Left ventricle myocardium inferior (tissue), 1 donor: ENCODE measurements at regions of chr14 and their contacts with region 1.

Region 1: DNA sequence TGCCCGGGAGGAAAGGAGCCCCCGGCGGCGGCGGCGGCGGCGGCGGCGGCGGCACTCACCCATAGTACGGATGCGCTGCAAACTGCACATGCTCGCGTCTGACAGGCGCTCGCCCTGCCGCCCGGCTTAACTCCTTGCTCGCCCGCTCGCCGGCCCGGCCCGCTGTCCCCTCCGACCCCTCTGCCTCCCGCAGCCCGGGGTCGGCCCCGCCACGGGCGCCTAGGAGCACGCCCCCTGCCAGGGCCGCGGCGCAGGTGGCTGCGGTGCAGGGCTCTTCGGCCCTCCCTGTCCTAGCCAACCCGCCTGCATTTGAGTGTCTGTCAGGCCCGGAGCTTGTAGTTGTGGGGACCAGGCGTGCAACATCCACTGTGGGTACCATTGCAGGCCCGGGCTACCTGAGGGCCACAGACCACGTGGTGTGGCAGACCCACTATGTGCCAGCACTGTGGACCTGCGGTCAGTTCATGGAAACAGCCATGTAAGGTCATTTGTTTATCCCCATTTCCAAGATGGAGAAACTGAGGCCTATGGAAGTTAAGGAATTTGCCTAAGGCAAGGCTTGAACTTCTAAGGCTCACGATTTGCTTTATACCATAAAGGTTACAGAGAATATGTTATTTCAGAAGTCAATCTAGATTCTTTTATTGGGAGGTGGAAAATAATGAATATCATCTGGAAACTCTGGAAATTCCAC is 17.6 kb upstream of the PLEKHH1 start:
- DNase-seq: no peak
- H3K4me3 ChIP-seq: peak overlapping the region; percentile 86
- H3K27ac ChIP-seq: peak overlapping the region; percentile 50
- H3K4me1 ChIP-seq: peaks cover 24% of the 10 kb centered on the region
- H3K27me3 ChIP-seq: peaks cover 25% of the 10 kb centered on the region
- CTCF ChIP-seq: no peak

Region 2: DNA sequence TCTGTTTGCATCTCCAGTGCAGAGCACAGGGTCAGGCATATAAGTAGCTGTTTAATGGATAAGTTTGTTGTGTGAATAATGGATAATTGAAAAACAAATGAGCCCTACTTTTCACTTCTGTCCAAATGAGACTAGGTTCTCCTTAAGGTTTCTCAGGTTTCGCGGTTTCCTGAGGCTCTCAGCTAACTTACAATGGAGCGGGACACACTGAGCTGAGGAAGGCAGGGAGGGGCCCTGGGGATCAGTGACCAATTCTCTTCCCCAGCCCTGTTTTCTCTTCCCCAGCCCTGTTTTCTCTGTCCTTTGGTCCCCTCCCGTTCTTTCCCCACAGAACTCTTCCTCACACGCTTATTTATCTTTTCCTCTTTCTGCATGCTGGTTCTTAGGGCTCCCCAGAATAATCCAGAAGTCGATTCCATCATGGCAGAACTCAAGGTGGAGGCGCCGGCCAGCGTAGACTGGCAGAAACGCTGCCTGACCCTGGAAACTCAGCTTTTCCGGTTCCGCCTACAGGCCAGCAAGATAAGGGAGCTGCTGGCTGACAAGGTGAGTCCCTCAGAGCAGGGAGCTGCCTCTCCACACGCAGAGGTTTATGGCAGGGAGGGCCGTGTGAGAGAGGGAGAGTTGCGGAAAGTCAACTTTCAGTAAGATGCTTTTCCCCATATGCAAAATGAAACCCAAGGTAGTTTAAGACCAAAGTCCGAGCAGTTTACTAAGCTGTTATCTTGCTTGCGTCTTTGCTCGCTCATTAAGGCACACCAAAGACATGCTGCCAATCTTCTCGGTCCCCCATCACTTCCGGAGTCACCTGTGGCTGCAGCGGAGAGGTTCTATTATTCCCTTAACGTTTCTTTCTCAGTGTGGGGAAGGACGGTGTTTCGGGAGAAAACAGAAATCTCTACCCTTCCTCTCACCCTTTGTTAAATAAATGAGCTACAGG is 26.2 kb after region 1 on chr14:
- intact Hi-C with region 1: loop called (anchors 2 kb)
- DNase-seq: no peak
- H3K4me3 ChIP-seq: no peak overlapping the region
- H3K27ac ChIP-seq: no peak overlapping the region
- H3K4me1 ChIP-seq: no peaks in the 10 kb centered on the region
- H3K27me3 ChIP-seq: peaks cover 6% of the 10 kb centered on the region
- CTCF ChIP-seq: no peak